Activated naive CD4-positive, alpha-beta T cell treated with anti-CD3 and anti-CD28 coated beads for 36 hours (primary cell): ENCODE measurements at regions of chr20 and their contacts with region 1.

Region 1: GRCh38 chr20:33005132-33005566 is 916 bp upstream of the SUN5 start:
- DNase-seq: peak; percentile 60
- H3K4me3 Mint-ChIP-seq: no peak overlapping the region
- H3K27ac Mint-ChIP-seq: no peak overlapping the region
- H3K4me1 Mint-ChIP-seq: peaks cover 24% of the 10 kb centered on the region
- H3K27me3 Mint-ChIP-seq: no peaks in the 10 kb centered on the region

Region 2: DNA sequence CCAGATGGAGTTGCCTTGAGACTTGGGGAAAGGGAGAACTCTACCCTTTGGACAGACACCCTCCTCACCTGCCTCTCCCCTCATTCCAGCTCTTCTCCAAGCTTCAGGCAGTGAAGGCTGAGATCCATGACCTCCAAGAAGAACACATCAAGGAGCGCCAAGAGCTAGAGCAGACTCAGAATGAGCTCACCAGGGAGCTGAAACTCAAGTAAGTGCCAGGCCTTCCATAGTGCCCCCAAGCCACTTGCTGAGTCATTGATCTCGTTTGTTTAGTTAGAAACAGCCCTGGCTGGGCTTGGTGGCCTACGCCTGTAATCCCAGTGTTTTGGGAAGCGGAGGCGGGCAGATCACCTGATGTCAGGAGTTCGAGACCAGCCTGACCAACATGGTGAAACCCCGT is 688.5 kb before region 1 on chr20:
- CTCF ChIA-PET with region 1: no interaction called
- intact Hi-C with region 1: no loop called
- DNase-seq: no peak
- H3K4me3 Mint-ChIP-seq: no peak overlapping the region
- H3K27ac Mint-ChIP-seq: peak overlapping the region; percentile 73
- H3K4me1 Mint-ChIP-seq: peaks cover 27% of the 10 kb centered on the region
- H3K27me3 Mint-ChIP-seq: no peaks in the 10 kb centered on the region

Region 3: DNA sequence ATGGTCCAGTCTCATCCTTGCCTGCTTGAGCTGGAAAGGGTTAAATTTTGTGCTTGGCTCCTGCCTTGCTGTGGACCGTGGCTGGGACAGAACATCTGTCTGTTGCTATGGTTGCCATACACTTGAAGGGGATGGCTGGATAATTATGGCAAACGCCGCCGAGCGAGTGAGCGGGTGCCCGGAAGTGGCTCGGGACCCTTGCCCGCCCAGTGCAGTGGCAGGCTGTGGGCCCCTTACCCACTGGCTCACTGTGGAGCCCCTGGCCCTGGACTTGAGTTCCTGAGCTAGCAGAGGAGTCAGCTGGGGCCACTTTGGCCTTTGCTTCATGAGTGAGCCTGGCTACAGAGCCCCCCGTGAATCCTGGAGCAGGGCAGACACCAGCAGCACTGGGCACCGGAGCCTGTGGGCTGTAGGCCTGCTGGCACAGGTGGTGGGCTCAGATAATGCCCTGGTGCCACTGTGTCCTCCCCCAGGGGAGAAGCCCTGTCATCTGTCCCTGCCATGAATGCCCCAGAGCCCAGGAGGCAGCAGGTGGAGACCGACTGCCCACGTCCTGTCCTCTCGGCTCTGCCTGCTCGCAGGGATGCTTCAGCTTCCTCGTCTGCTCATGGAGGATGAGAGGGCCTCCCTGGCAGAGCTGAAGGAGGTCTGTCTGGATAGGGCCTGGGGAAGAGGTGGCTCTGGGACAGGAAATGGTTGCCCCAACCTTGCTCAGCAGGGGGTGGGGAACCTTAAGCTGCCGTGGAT is 394.5 kb before region 1 on chr20:
- CTCF ChIA-PET with region 1: no interaction called
- intact Hi-C with region 1: no loop called
- DNase-seq: no peak
- H3K4me3 Mint-ChIP-seq: no peak overlapping the region
- H3K27ac Mint-ChIP-seq: no peak overlapping the region
- H3K4me1 Mint-ChIP-seq: peaks cover under 1% of the 10 kb centered on the region
- H3K27me3 Mint-ChIP-seq: no peaks in the 10 kb centered on the region

Region 4: DNA sequence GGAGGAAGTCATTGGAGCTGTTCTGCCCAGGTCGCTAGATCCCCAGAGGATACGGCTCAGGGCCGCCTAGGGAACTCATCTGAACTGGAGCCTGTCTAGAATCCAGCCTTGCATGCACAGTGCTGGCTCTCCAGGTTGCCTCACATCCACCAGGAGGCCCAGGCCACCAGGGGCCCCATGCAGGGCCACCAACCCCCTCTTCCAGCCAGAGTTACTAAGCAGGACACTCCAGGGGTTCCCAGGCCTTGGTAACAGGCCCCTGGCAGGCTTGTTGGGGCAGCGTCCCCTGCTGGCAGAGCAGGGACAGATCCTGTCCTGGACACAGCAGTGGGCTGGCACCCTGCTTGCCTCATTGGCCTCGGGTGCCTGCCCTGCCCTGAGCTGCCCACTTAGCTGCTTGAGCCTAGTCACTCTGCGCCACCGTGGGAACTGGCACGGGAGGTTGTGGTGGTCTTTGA is 111.1 kb before region 1 on chr20:
- CTCF ChIA-PET with region 1: no interaction called
- intact Hi-C with region 1: no loop called
- DNase-seq: peak; percentile 41
- H3K4me3 Mint-ChIP-seq: no peak overlapping the region
- H3K27ac Mint-ChIP-seq: no peak overlapping the region
- H3K4me1 Mint-ChIP-seq: peaks cover 4% of the 10 kb centered on the region
- H3K27me3 Mint-ChIP-seq: no peaks in the 10 kb centered on the region

Region 5: DNA sequence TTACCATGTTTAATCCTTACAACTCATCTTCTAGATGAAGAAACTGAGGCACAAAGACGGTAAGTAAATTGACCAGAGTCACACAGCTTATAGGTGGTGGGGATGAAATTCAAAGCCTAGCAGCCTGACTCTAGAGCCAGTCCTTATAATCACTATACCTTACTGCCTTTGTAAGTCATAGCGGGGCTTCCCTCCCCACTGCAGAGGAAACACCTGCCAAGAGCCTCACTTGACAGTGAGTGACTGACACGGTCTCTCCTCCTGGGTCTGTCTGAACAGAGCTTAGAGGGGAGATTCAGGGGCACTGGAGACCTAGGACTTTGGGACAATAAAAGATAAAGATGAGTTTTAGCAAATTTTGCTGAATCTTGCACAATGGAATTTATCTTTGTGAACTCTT is 13.8 kb before region 1 on chr20:
- CTCF ChIA-PET with region 1: interaction called, 13 read pairs
- intact Hi-C with region 1: no loop called
- DNase-seq: peak; percentile 68
- H3K4me3 Mint-ChIP-seq: no peak overlapping the region
- H3K27ac Mint-ChIP-seq: no peak overlapping the region
- H3K4me1 Mint-ChIP-seq: peaks cover 37% of the 10 kb centered on the region
- H3K27me3 Mint-ChIP-seq: no peaks in the 10 kb centered on the region